Aorta (tissue), 5 donors: ENCODE measurements at regions of chr6 and their contacts with region 1.

Region 1: GRCh38 chr6:31546962-31547726 is at the start of gene NFKBIL1:
- DNase-seq: peak; percentile 97
- ATAC-seq: peak; percentile 97
- H3K4me3 ChIP-seq: peak within 1 kb of the TSS; percentile 14 to 59
- H3K27ac ChIP-seq: peak within 1 kb of the TSS in 1 of 2 donors; percentile 31
- H3K4me1 ChIP-seq: no peaks in the 10 kb centered on the region
- H3K27me3 ChIP-seq: no peaks in the 10 kb centered on the region
- total RNA-seq, gene NFKBIL1: 16.0 to 19.8 TPM

Region 2: DNA sequence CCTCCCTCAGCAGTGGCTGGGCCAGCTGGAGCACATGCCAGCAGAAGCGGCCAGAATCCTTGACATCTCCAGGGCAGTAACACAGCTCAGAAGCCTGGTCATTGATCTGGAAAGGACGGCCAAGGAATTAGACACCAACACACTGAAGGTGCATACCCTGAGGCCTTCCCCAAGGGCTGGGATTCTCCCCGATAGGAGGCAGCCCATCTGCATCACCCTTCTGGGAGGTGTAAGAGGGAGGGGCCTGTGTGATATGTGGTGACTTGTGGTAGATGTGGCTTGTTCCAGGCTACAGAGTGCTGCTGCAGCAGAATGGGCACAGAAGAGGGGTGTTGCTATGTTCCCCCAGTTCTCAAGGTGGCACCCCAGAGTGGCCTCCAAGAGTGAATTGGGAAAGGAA is 1400.1 kb before region 1 on chr6:
- intact Hi-C with region 1: no loop called
- DNase-seq: no peak
- ATAC-seq: no peak
- H3K4me3 ChIP-seq: no peak overlapping the region
- H3K27ac ChIP-seq: no peak overlapping the region
- H3K4me1 ChIP-seq: no peaks in the 10 kb centered on the region
- H3K27me3 ChIP-seq: no peaks in the 10 kb centered on the region

Region 3: DNA sequence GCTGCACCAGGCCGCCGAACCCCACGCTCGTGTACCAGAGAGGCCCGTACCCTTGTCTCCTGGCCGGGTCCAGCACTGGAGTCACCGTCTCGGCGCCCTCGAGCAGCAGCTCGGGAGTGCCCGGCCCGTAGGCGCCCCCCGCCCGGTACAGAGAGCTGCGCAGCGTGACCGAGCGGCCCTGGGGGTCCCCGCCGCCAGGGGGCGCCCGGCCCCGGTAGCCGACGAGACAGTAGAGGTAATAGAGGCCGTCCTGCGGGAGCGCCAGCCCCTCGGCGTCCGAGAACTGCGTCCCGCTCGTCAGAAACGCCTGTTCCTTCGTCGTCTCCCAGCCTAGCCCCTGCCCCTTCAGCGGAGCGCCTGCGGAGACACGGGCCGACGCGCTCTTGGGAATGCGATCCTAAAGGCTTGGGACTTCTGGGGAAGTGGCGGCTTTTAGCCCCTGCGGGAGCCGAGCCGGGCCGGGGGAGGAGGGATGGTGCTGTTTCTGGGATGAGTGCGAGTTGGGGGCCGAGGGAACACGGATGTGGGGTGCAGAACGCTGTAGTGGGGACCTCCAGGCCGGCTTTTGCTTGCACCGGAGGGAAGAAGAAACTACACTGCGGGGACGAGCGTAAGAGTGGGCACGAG is 33.8 kb after region 1 on chr6:
- intact Hi-C with region 1: loop called (anchors 2 kb)
- DNase-seq: peak; percentile 92 to 97
- ATAC-seq: peak; percentile 96
- H3K4me3 ChIP-seq: peak overlapping the region; percentile 20 to 32
- H3K27ac ChIP-seq: peak overlapping the region in 1 of 2 donors; percentile 7
- H3K4me1 ChIP-seq: no peaks in the 10 kb centered on the region
- H3K27me3 ChIP-seq: no peaks in the 10 kb centered on the region

Region 4: DNA sequence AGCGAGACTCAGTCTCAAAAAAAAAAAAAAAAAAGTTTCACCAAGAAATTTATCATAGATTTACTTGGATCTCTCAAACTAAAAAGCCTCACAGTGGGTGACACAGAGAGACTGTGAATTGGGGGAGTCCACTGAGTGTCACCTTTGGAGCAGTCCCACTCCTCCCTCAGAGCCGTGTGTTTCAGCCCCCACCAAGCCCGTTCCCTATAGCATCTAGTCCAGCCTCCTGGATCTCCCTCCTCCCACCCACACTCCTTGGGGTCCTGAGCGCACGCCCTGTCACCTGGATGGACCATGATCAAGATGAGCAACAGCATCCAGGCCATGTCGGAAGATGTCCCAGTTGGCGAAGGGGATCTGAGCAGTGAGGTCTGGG is 45.2 kb after region 1 on chr6:
- intact Hi-C with region 1: no loop called
- DNase-seq: no peak
- ATAC-seq: no peak
- H3K4me3 ChIP-seq: no peak overlapping the region
- H3K27ac ChIP-seq: no peak overlapping the region
- H3K4me1 ChIP-seq: no peaks in the 10 kb centered on the region
- H3K27me3 ChIP-seq: no peaks in the 10 kb centered on the region